Dendritic cell treated with granulocyte-macrophage colony-stimulating factor and Interleukin-4, amounts not matched to agents 40 ng/mL and 50 ng/mL, for 4 days (primary cell): ENCODE measurements at regions of chr13 and their contacts with region 1.

Region 1: GRCh38 chr13:79314652-79315051 is 91.4 kb downstream of the RBM26 start:
- H3K4me3 Mint-ChIP-seq: no peak overlapping the region
- H3K27ac Mint-ChIP-seq: no peak overlapping the region
- H3K4me1 Mint-ChIP-seq: no peaks in the 10 kb centered on the region
- H3K27me3 Mint-ChIP-seq: no peaks in the 10 kb centered on the region

Region 2: DNA sequence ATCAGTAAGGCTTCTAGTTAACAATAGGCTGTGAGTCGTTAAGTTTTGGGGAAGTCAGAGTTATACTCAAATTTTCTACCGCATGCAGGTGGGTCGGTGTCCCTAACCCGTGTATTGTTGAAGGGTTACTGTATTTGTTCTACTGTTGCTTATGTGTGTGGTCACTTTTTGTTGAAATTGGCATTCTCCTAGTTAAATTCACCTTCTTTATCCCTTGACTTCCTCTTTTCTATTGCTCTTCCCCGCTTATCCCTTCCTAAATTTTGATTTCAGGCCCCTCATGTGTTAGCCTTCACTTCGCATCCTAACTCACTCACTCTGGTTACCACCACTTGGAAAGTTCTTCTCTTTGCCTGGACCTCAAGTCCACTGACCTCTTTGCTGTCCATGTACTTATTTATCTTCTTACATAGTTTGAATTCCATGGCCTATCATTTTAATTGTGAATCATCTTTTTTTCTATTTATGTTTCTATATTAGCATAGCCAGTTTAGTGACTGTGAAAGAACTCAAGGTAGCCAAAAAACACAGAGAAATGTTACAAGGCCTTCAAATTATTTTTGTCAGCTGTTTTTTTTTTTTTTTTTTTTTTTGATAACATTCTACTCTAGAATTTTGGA is 219.2 kb after region 1 on chr13:
- intact Hi-C with region 1: loop called (anchors 5 kb)
- H3K4me3 Mint-ChIP-seq: no peak overlapping the region
- H3K27ac Mint-ChIP-seq: no peak overlapping the region
- H3K4me1 Mint-ChIP-seq: no peaks in the 10 kb centered on the region
- H3K27me3 Mint-ChIP-seq: peaks cover 12% of the 10 kb centered on the region